Natural killer cell (primary cell): ENCODE measurements at regions of chr5 and their contacts with region 1.

Region 1: DNA sequence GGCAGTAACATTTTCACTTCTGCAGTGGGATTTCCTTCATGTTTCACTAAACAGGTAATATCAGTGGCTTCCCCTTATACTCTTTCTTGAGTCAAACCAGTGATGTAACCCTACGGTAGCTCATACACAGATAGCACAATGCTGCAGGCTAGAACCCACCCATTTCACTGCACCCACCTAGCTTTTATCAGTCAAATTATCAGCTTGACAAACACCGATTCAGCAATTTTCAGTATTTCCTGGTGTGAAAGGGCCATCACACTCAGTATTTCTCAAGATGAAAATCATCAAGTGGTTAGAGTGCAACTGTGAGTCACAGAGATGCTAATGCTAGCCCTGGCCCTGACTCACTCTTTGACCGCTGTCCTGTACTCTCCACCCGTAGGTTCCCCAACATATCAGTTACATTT is 242.3 kb upstream of the PTGER4 start:
- DNase-seq: peak in 1 of 2 donors; percentile 72
- ATAC-seq: peak; percentile 75 to 93 (median 79)
- H3K4me3 ChIP-seq: no peak overlapping the region
- H3K4me3 Mint-ChIP-seq: peak overlapping the region; percentile 83
- H3K27ac ChIP-seq: peak overlapping the region; percentile 93
- H3K27ac Mint-ChIP-seq: peak overlapping the region; percentile 90 to 95
- H3K4me1 ChIP-seq: peaks cover 59% of the 10 kb centered on the region
- H3K4me1 Mint-ChIP-seq: peaks cover 81 to 83% of the 10 kb centered on the region in 2 donors
- H3K27me3 ChIP-seq: no peaks in the 10 kb centered on the region
- H3K27me3 Mint-ChIP-seq: no peaks in the 10 kb centered on the region
- CTCF ChIP-seq: no peak

Region 2: DNA sequence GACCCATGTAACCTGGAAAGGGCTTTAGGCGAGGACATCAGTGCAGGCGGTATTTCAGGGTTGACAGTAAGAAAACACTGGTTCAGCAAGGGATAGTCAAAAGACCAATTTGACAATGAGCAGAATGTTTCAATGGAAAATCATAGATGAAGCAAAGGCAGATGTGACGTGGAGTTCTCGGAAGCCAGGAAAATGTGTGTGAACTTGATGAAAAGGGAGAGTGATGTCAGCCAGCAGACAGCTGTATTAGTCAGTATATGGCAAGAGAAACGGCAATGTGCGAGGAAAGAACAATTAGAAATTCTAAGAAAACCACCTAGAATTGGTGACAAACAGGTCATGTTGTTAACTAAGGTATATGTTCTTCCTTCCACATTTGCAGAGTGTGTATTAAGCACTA is 508.7 kb before region 1 on chr5:
- intact Hi-C with region 1: no loop called
- DNase-seq: no peak
- ATAC-seq: no peak
- H3K4me3 ChIP-seq: no peak overlapping the region
- H3K4me3 Mint-ChIP-seq: no peak overlapping the region
- H3K27ac ChIP-seq: no peak overlapping the region
- H3K27ac Mint-ChIP-seq: no peak overlapping the region
- H3K4me1 ChIP-seq: no peaks in the 10 kb centered on the region
- H3K4me1 Mint-ChIP-seq: no peaks in the 10 kb centered on the region
- H3K27me3 ChIP-seq: peaks cover 3% of the 10 kb centered on the region
- H3K27me3 Mint-ChIP-seq: peaks cover 27 to 50% of the 10 kb centered on the region in 2 donors
- CTCF ChIP-seq: no peak

Region 3: DNA sequence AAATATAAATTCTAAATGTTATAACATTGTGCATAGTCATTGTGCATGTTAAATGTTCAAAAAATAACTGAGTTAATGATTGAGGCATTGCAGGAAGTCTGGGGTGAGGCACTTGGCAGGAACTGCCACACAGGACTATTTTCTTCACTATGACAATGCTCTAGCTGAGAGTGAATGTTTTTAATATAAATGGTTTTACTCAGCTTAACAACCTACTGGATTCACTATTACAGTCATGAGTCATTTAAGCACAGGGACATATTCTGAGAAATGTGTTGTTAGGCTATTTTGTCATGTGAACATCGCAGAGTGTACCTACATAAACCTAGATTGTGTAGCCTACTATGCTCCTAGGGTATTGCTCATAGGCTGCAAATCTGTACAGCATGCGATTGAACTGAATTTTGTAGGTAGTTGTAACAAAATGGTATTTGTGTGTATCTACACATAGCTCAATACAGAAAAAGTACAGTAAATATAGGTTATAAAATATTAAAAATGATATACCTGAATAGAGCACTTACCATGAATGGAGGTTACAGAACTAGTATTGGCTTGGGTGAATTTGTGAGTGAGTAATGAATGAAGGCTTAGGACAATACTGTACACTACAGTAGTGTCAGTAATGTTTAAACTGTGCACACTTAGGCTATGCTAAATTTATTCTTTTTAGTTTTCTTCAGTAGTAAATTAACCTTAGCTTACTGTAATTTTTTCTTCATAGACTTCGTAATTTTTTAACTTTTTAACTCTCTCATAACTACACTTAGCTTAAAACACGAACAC is 103.8 kb before region 1 on chr5:
- intact Hi-C with region 1: loop called (anchors 5 kb)
- DNase-seq: peak in 1 of 2 donors; percentile 10
- ATAC-seq: peak; percentile 60 to 86 (median 75)
- H3K4me3 ChIP-seq: no peak overlapping the region
- H3K4me3 Mint-ChIP-seq: no peak overlapping the region
- H3K27ac ChIP-seq: no peak overlapping the region
- H3K27ac Mint-ChIP-seq: peak overlapping the region in 1 of 2 donors; percentile 26
- H3K4me1 ChIP-seq: peaks cover 17% of the 10 kb centered on the region
- H3K4me1 Mint-ChIP-seq: peaks cover 43% of the 10 kb centered on the region in 2 donors
- H3K27me3 ChIP-seq: no peaks in the 10 kb centered on the region
- H3K27me3 Mint-ChIP-seq: no peaks in the 10 kb centered on the region
- CTCF ChIP-seq: no peak

Region 4: DNA sequence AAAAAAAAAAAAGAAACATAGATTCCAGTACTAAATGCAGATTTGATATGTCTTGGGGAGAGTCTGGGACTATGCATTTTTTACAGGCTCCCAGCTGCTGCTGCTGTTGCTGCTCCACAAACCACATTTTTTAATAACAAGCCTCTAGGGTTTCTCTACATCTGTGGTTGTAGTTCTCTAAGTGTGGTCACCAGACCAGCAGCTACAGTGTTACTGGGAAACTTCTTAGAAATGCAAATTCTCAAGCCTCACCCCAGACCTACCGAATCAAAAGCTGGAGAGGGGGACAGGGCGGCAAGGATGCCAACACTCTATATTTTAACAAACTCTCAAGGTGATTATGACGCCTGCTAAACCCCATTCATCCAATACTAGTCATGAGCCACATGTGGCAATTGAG is 51.2 kb before region 1 on chr5:
- intact Hi-C with region 1: loop called (anchors 2 kb)
- DNase-seq: peak; percentile 34 to 68
- ATAC-seq: peak; percentile 79 to 84 (median 82)
- H3K4me3 ChIP-seq: no peak overlapping the region
- H3K4me3 Mint-ChIP-seq: peak overlapping the region; percentile 61
- H3K27ac ChIP-seq: peak overlapping the region; percentile 34
- H3K27ac Mint-ChIP-seq: peak overlapping the region; percentile 75 to 86
- H3K4me1 ChIP-seq: peaks cover 26% of the 10 kb centered on the region
- H3K4me1 Mint-ChIP-seq: peaks cover 75 to 78% of the 10 kb centered on the region in 2 donors
- H3K27me3 ChIP-seq: no peaks in the 10 kb centered on the region
- H3K27me3 Mint-ChIP-seq: no peaks in the 10 kb centered on the region
- CTCF ChIP-seq: no peak

Region 5: GRCh38 chr5:40410231-40410861 is 27.1 kb before region 1 on chr5:
- intact Hi-C with region 1: loop called (anchors 1 kb)
- DNase-seq: peak; percentile 52 to 95
- ATAC-seq: peak; percentile 83 to 92 (median 89)
- H3K4me3 ChIP-seq: no peak overlapping the region
- H3K4me3 Mint-ChIP-seq: peak overlapping the region; percentile 78
- H3K27ac ChIP-seq: peak overlapping the region; percentile 95
- H3K27ac Mint-ChIP-seq: peak overlapping the region; percentile 88 to 95
- H3K4me1 ChIP-seq: peaks cover 33% of the 10 kb centered on the region
- H3K4me1 Mint-ChIP-seq: peaks cover 57 to 62% of the 10 kb centered on the region in 2 donors
- H3K27me3 ChIP-seq: no peaks in the 10 kb centered on the region
- H3K27me3 Mint-ChIP-seq: no peaks in the 10 kb centered on the region
- CTCF ChIP-seq: no peak

Region 6: GRCh38 chr5:40474250-40474649 is 36.8 kb after region 1 on chr5:
- intact Hi-C with region 1: no loop called
- DNase-seq: no peak
- ATAC-seq: no peak
- H3K4me3 ChIP-seq: no peak overlapping the region
- H3K4me3 Mint-ChIP-seq: no peak overlapping the region
- H3K27ac ChIP-seq: no peak overlapping the region
- H3K27ac Mint-ChIP-seq: no peak overlapping the region
- H3K4me1 ChIP-seq: no peaks in the 10 kb centered on the region
- H3K4me1 Mint-ChIP-seq: no peaks in the 10 kb centered on the region
- H3K27me3 ChIP-seq: no peaks in the 10 kb centered on the region
- H3K27me3 Mint-ChIP-seq: no peaks in the 10 kb centered on the region
- CTCF ChIP-seq: no peak

Region 7: GRCh38 chr5:40627706-40628105 is 190.2 kb after region 1 on chr5:
- intact Hi-C with region 1: no loop called
- DNase-seq: no peak
- ATAC-seq: no peak
- H3K4me3 ChIP-seq: no peak overlapping the region
- H3K4me3 Mint-ChIP-seq: no peak overlapping the region
- H3K27ac ChIP-seq: no peak overlapping the region
- H3K27ac Mint-ChIP-seq: no peak overlapping the region
- H3K4me1 ChIP-seq: peaks cover 4% of the 10 kb centered on the region
- H3K4me1 Mint-ChIP-seq: peaks cover 13 to 17% of the 10 kb centered on the region in 2 donors
- H3K27me3 ChIP-seq: peaks cover 3% of the 10 kb centered on the region
- H3K27me3 Mint-ChIP-seq: peaks cover 0 to 3% of the 10 kb centered on the region in 2 donors
- CTCF ChIP-seq: no peak

Region 8: DNA sequence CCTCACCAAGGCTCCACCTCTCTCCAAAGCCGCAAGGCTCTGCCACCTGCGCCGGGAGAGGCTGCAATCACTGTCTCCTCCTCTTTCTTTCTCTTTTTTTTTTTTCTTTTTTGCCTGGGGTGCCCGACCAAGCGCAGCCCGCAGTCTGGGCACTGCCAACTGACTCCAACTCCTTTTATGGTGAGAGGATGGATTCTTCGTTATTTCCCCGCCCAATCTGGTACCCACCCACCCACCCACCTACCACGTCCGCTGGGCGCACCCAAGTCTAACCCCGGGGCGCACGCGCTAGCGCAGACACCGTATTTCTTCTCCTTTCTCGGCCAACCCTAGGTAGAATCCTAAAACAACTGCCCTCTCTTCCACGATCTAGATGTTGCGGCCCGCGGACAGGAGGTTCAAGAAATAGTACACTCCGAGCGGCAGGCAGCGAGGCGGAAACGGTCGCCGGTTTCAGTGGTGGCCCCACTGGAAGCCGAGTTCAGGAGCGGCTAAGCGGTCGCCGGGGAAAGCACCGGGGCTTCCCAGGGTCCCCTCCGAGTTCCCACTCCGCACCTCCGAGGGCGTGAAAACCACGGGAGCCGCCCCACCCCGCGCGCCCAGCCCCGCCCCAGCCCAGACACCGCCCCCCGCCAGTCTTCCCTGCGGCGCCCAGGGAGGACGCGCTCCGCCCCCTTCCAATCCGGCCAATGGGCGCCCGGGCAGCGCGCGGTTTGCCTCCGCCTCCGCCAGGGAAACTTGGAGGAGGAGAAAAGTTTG is 241.9 kb after region 1 on chr5:
- intact Hi-C with region 1: loop called (anchors 2 kb)
- DNase-seq: peak; percentile 80 to 94
- ATAC-seq: peak; percentile 68 to 84 (median 77)
- H3K4me3 ChIP-seq: peak overlapping the region; percentile 73
- H3K4me3 Mint-ChIP-seq: peak overlapping the region; percentile 99
- H3K27ac ChIP-seq: peak overlapping the region; percentile 88
- H3K27ac Mint-ChIP-seq: peak overlapping the region; percentile 91 to 95
- H3K4me1 ChIP-seq: peaks cover 28% of the 10 kb centered on the region
- H3K4me1 Mint-ChIP-seq: peaks cover 87 to 91% of the 10 kb centered on the region in 2 donors
- H3K27me3 ChIP-seq: no peaks in the 10 kb centered on the region
- H3K27me3 Mint-ChIP-seq: no peaks in the 10 kb centered on the region
- CTCF ChIP-seq: no peak

Region 9: GRCh38 chr5:40842351-40842750 is 404.9 kb after region 1 on chr5:
- intact Hi-C with region 1: no loop called
- DNase-seq: no peak
- ATAC-seq: no peak
- H3K4me3 ChIP-seq: no peak overlapping the region
- H3K4me3 Mint-ChIP-seq: peak overlapping the region; percentile 100
- H3K27ac ChIP-seq: no peak overlapping the region
- H3K27ac Mint-ChIP-seq: peak overlapping the region in 1 of 2 donors; percentile 98
- H3K4me1 ChIP-seq: no peaks in the 10 kb centered on the region
- H3K4me1 Mint-ChIP-seq: peaks cover 20 to 26% of the 10 kb centered on the region in 2 donors
- H3K27me3 ChIP-seq: no peaks in the 10 kb centered on the region
- H3K27me3 Mint-ChIP-seq: peaks cover 0 to 6% of the 10 kb centered on the region in 2 donors
- CTCF ChIP-seq: no peak